Transverse colon (tissue), 4 donors: ENCODE measurements at regions of chr15 and their contacts with region 1.

Region 1: GRCh38 chr15:27392163-27392562 is 421.2 kb downstream of the GABRG3 start:
- DNase-seq: no peak
- H3K4me3 ChIP-seq: no peak overlapping the region
- H3K27ac ChIP-seq: no peak overlapping the region
- H3K4me1 ChIP-seq: no peaks in the 10 kb centered on the region
- H3K27me3 ChIP-seq: no peaks in the 10 kb centered on the region
- CTCF ChIP-seq: no peak
- EP300 ChIP-seq: no peak
- POLR2A ChIP-seq: no peak

Region 2: DNA sequence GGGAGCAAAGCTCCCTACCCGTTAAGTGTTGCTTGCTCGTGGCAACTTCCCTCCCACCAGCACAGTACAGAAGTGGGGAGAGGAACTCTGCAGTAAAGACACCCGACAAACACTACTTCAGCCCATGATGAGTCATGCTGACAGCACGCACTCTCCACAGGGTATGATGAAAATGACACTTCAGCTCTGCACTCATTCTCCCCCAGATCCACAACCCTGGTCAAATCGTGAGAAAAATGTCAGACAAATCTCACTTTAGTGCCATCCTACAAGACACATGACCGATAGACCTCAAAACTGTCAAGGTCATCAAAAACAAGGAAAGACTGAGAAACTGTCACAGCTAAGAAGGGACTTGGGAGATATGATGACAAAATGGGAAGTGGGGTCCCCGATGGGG is 428.1 kb after region 1 on chr15:
- in situ Hi-C with region 1: no loop called
- intact Hi-C with region 1: loop called (anchors 5 kb)
- DNase-seq: no peak
- H3K4me3 ChIP-seq: no peak overlapping the region
- H3K27ac ChIP-seq: no peak overlapping the region
- H3K4me1 ChIP-seq: no peaks in the 10 kb centered on the region
- H3K27me3 ChIP-seq: no peaks in the 10 kb centered on the region
- CTCF ChIP-seq: no peak
- EP300 ChIP-seq: no peak
- POLR2A ChIP-seq: no peak